ENCODE measurements at regions of chr5 and their contacts with region 1.

Region 1: DNA sequence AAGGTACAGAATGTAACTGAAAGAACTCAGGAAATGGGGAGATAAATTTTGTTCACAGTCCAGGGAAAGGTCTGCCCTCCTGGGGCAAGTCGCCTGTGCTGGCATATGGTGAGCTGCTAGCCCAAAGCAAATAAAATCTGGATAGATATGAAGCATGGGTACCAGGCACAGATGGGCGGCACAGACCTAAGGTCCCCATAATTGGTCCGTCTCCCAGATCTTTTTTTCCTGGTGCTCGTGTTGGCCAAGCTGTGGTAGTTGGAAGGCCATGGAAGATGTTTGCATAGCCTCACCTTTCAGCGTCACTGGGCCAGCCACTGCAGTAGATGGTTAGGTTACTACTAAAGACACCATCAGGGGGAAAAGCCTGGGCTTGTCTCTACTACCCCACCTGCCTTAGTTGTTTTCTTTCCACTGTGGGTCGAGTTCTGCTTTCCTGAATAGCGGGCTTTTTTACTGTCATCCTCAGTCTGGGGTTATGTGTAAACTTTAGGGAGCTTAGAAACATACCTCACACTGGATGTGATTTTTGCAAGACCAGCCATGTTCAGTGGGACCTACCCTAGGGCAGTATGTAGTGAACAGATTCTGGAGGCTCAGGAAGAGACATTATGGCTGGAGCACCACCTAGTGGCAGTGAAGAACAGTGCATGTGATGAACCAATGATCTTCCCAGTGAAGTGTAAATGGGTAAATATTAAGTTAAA is 24.2 kb upstream of the GLRX start:
- DNase-seq: peak in 8 of 10 donors; percentile 38 to 94 (median 76)

Region 2: GRCh38 chr5:95664204-95664786 is 182.4 kb before region 1 on chr5:
- intact Hi-C with region 1: loop called (anchors 5 kb)
- DNase-seq: peak in 1 of 10 donors; percentile 24

Region 3: GRCh38 chr5:96388176-96388575 is 541.5 kb after region 1 on chr5:
- intact Hi-C with region 1: no loop called
- DNase-seq: no peak

Measured in posterior cingulate gyrus (tissue), 11 donors.